Lower leg skin (tissue), 4 donors: ENCODE measurements at regions of chr11 and their contacts with region 1.

Region 1: DNA sequence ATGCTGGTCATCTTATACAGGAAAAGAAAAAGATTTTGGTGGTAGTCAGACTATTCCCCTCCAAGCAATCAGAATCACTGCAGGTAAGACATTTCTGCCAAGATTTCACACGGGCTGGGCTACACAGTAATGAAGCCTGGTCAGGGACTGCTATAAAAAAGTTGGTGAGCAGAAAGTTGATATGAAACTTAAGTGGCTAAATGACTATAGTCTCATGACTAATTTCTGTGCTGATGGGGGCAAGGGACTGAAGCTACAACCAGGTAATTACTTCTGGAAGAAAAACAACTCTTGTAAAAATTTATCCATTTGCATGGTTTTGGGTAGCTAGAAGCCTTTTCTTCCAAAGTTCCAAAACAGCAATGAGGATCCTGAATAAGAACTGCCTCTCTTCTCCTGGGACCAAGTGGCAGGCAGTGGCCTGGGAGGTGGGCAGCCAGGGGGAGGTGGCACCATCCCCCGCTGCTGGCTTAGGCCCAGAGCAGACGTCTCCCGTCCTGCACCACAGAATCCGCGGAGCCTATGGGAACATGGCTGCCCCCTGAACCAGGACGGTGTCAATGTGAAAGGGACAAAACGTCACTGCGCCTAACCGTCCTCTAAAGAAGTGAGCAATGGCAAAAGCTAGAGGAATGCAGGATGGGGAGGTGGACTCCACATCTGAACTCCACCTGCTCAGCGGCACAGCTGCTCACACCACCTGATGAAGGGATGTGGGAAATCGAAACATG is 122.6 kb upstream of the LMO1 start:
- DNase-seq: no peak
- H3K4me3 ChIP-seq: no peak overlapping the region
- CTCF ChIP-seq: no peak
- POLR2A ChIP-seq: no peak

Region 2: GRCh38 chr11:8318336-8318935 is 67.9 kb before region 1 on chr11:
- intact Hi-C with region 1: no loop called
- DNase-seq: no peak
- H3K4me3 ChIP-seq: no peak overlapping the region
- CTCF ChIP-seq: no peak
- POLR2A ChIP-seq: no peak

Region 3: GRCh38 chr11:8347978-8348377 is 38.3 kb before region 1 on chr11:
- intact Hi-C with region 1: loop called (anchors 2 kb)
- DNase-seq: no peak
- H3K4me3 ChIP-seq: no peak overlapping the region
- CTCF ChIP-seq: no peak
- POLR2A ChIP-seq: no peak

Region 4: GRCh38 chr11:8429483-8429882 is 43.2 kb after region 1 on chr11:
- intact Hi-C with region 1: no loop called
- DNase-seq: no peak
- H3K4me3 ChIP-seq: no peak overlapping the region
- CTCF ChIP-seq: no peak
- POLR2A ChIP-seq: no peak